ENCODE measurements at regions of chr19 and their contacts with region 1.

Region 1: GRCh38 chr19:12757544-12758274 is 6.1 kb downstream of the BEST2 start:
- DNase-seq: peak; percentile 91
- ATAC-seq: peak; percentile 88
- H3K4me3 Mint-ChIP-seq: peak overlapping the region; percentile 59
- H3K27ac Mint-ChIP-seq: peak overlapping the region; percentile 63; the same call in 1 of the 2 replicates
- H3K4me1 Mint-ChIP-seq: peaks cover 2% of the 10 kb centered on the region; the same call in 1 of the 2 replicates
- H3K27me3 Mint-ChIP-seq: peaks cover 26% of the 10 kb centered on the region
- CTCF ChIP-seq: peak; percentile 96

Region 2: GRCh38 chr19:12716861-12717260 is 40.8 kb before region 1 on chr19:
- CTCF ChIA-PET with region 1: interaction called, 35 read pairs
- POLR2A ChIA-PET with region 1: interaction called, 3 read pairs
- DNase-seq: no peak
- ATAC-seq: peak; percentile 65
- H3K4me3 Mint-ChIP-seq: no peak overlapping the region
- H3K27ac Mint-ChIP-seq: no peak overlapping the region; the same call in 1 of the 2 replicates
- H3K4me1 Mint-ChIP-seq: peaks cover 11% of the 10 kb centered on the region
- H3K27me3 Mint-ChIP-seq: no peaks in the 10 kb centered on the region
- CTCF ChIP-seq: no peak

Region 3: GRCh38 chr19:12736995-12737834 is 20.5 kb before region 1 on chr19 and contains the start of gene GET3:
- CTCF ChIA-PET with region 1: interaction called, 17 read pairs
- POLR2A ChIA-PET with region 1: interaction called, 7 read pairs
- DNase-seq: peak; percentile 89
- ATAC-seq: peak; percentile 93
- H3K4me3 Mint-ChIP-seq: peak within 1 kb of the TSS; percentile 100
- H3K27ac Mint-ChIP-seq: peak within 1 kb of the TSS; percentile 99
- H3K4me1 Mint-ChIP-seq: peaks cover 25% of the 10 kb centered on the region
- H3K27me3 Mint-ChIP-seq: no peaks in the 10 kb centered on the region; the same call in 1 of the 2 replicates
- CTCF ChIP-seq: no peak
- total RNA-seq, gene GET3: 104 to 110 TPM (median 104 TPM) in 3 replicates

Region 4: DNA sequence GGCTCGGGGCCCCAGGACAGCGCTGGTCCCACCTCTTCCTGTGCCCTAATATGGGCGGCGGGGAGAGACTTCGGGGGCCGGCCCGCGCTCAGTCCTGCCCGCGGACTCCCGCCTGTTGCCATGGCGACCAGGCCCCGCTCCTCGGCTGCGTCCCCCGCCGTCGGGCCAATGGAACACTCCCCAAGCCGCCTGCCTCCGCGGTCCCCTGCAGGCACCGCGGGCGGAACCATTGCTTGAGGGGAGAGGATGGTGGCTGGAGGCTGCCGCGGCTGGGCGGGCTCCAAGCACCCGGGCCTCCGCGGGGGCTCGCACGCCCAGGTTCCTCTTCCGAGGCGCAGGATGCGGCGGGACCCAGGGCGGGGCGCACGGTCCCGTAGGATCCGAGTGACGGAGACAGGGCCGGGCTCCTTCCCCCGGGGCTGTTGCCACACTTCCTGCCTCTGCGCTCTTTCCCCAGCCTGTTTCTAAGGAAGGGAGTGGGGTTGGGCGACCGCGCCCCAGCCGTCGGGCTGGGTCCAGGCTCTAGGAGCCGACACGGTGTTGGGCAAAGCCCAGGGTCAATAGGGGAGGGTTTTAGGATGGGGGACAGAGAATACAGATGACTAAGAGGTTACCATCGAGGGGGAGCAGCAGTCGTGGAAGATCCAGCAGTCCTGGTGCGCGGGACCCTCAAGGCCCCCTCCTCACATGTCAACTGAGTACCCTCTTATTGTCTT is 32.4 kb after region 1 on chr19:
- CTCF ChIA-PET with region 1: interaction called, 341 read pairs
- POLR2A ChIA-PET with region 1: interaction called, 3 read pairs
- DNase-seq: peak; percentile 98
- ATAC-seq: peak; percentile 63
- H3K4me3 Mint-ChIP-seq: peak overlapping the region; percentile 84
- H3K27ac Mint-ChIP-seq: peak overlapping the region; percentile 79; the same call in 1 of the 2 replicates
- H3K4me1 Mint-ChIP-seq: peaks cover 29% of the 10 kb centered on the region
- H3K27me3 Mint-ChIP-seq: peaks cover 32% of the 10 kb centered on the region
- CTCF ChIP-seq: no peak

Region 5: DNA sequence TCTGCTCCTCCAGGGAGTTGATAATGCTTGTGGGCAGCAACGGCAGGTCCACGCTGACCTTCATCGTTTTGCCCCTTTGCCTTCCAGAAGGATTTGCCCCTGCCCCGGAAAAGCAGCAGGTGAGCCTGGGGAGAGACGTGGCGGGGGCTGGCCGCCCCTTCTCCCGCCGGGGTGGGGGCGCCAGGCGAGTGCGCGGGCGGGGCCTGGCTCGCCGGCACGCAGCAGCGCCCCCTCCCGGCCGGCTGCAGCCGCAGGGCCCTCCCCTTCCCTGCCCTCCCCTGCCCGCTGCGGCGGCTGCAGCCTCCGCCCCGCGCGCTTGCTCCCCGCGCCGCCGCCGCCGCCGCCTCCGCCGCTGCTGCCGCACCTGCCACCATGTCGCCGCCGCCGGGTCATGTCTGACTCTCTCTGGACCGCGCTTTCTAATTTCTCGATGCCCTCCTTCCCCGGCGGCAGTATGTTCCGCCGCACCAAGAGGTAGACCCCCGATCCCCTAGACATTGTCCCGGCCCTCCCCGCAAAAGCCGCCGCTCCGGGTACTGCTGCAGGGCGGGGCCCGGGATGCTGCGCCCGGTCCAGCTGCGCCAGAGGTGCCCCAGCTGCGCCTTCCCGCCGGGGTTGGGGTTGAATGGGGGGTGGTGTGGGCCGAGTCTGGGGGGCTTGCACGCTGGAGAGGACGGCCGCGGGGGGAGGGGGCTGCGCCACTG is 80.6 kb after region 1 on chr19 and contains the start of gene MAST1:
- CTCF ChIA-PET with region 1: no interaction called
- POLR2A ChIA-PET with region 1: no interaction called
- DNase-seq: peak; percentile 74
- ATAC-seq: peak; percentile 9
- H3K4me3 Mint-ChIP-seq: peak within 1 kb of the TSS; percentile 79
- H3K27ac Mint-ChIP-seq: peak within 1 kb of the TSS; percentile 61; the same call in 1 of the 2 replicates
- H3K4me1 Mint-ChIP-seq: peaks cover 44% of the 10 kb centered on the region
- H3K27me3 Mint-ChIP-seq: peaks cover 40% of the 10 kb centered on the region
- CTCF ChIP-seq: peak; percentile 72; the same call in 1 of the 2 replicates
- total RNA-seq, gene MAST1: 24.3 to 28.4 TPM (median 27.3 TPM) in 3 replicates

Region 6: DNA sequence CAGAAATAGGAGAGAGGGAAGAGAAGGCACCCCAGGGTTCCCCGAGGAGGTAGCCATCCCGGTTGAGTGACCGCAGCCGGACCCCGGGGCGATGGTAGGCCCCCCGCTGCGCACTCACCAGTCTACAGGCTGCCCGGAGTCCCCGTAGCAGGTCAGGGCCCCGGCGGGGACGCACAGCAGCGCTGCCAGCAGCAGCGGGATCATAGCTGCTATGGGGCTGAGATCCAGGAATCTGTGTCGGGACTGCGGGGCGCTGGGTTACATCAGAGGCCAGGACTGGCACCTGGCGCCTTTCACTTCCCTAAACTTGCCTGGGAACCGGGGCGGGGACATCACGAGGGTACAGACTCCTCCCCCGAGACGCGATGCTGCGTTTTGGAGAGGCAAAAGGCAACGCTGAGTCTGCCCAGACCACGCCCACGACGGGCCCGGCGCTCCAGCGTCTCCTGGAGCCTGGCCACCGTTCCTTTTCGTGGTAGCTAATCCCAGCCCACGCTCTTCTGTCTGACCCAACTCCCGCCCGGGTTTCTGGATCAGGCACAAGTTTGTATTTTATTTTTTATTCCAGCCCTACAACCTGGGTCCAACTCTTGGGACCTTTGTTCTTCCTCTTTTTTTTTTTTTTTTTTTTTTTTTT is 123.6 kb after region 1 on chr19 and contains the start of gene DNASE2:
- CTCF ChIA-PET with region 1: interaction called, 20 read pairs
- POLR2A ChIA-PET with region 1: interaction called, 5 read pairs
- DNase-seq: peak; percentile 97
- ATAC-seq: peak; percentile 66
- H3K4me3 Mint-ChIP-seq: peak within 1 kb of the TSS; percentile 90
- H3K27ac Mint-ChIP-seq: peak within 1 kb of the TSS; percentile 94
- H3K4me1 Mint-ChIP-seq: peaks cover 8% of the 10 kb centered on the region
- H3K27me3 Mint-ChIP-seq: peaks cover 30% of the 10 kb centered on the region
- CTCF ChIP-seq: no peak
- total RNA-seq, gene DNASE2: 31.7 to 35.7 TPM (median 33.4 TPM) in 3 replicates